CD4-positive, alpha-beta T cell (primary cell): ENCODE measurements at regions of chr4 and their contacts with region 1.

Region 1: DNA sequence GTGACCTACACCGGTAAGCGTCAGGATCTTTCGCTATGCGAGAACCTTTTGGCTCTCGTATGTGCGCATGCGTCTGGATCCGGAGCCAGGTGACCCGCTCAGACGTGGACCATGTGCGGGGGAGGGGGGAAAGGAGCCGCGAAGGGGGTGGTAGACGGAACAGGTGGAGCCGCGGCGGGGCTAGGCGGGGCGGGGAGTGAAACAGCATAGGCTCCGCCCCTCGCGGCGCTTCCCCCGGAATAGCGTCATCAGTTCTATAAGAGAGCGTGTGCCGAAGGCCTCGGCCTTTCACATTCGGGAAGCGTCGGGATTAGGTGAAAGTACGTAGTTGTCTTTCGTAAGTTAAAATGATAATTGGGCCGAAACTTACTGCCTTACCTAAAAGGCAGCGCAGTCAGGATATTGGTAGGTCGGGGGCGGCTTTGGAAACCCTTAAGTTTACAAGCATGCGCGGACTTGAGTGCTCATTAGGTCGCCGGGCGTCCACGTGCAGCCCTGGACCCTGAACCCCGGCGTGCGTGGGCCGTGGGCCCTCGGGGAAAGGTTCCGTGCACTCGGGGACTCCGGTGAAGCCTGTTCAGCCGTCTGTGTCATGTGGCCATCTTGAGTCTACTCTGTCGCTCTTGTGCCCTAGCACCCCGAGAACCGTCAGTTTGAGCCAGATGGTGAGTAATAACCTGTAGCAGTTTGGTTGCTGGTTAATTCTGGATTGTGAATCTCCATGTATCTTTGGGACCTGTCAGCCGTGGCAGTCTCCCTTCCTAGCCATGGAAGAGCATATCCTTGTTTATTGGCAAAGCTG is 74.1 kb downstream of the PRSS12 start:
- DNase-seq: peak; percentile 95 to 99 (median 97)
- ATAC-seq: peak; percentile 95
- H3K4me3 ChIP-seq: peak overlapping the region; percentile 89
- H3K4me3 Mint-ChIP-seq: peak overlapping the region; percentile 92
- H3K27ac ChIP-seq: peak overlapping the region; percentile 92 to 97
- H3K27ac Mint-ChIP-seq: peak overlapping the region; percentile 95
- H3K4me1 ChIP-seq: peaks cover 21% of the 10 kb centered on the region
- H3K4me1 Mint-ChIP-seq: peaks cover 61% of the 10 kb centered on the region
- H3K27me3 ChIP-seq: no peaks in the 10 kb centered on the region
- H3K27me3 Mint-ChIP-seq: no peaks in the 10 kb centered on the region
- CTCF ChIP-seq: no peak

Region 2: GRCh38 chr4:118352843-118353533 is 74.3 kb after region 1 on chr4 and contains the start of gene PRSS12:
- CTCF ChIA-PET with region 1: no interaction called
- POLR2A ChIA-PET with region 1: interaction called, 5 read pairs
- intact Hi-C with region 1: loop called (anchors 2 kb)
- DNase-seq: peak in 13 of 14 experiments; percentile 13 to 73 (median 35)
- ATAC-seq: peak; percentile 81
- H3K4me3 ChIP-seq: peak within 1 kb of the TSS; percentile 23
- H3K4me3 Mint-ChIP-seq: peak within 1 kb of the TSS; percentile 83
- H3K27ac ChIP-seq: no peak within 1 kb of the TSS
- H3K27ac Mint-ChIP-seq: no peak within 1 kb of the TSS
- H3K4me1 ChIP-seq: peaks cover 18% of the 10 kb centered on the region
- H3K4me1 Mint-ChIP-seq: peaks cover 16% of the 10 kb centered on the region
- H3K27me3 ChIP-seq: peaks cover 34 to 85% of the 10 kb centered on the region in 2 experiments
- H3K27me3 Mint-ChIP-seq: peaks cover 86% of the 10 kb centered on the region
- CTCF ChIP-seq: peak; percentile 60
- total RNA-seq, gene PRSS12: not detected

Region 3: DNA sequence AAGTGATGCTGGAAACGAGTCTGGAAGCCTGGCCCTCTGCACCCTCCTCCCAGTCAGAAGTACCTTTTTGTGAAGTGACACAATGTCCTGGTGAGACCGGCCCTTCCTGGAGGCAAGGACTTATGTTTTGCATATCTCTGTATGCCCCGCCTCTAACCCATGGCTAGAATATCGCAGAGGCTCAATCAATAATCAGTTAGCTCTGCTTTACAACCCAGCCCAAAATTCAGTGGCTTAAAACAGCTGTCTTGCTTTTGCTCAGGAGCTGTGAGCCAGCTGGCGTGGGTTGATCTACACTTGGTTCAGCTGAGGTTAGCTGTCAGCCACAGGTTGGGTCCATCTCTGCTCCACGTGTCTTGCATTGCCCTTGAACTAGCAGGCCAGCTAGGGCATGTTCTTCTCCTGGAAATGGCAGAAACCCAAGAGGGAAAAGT is 307.7 kb after region 1 on chr4:
- CTCF ChIA-PET with region 1: no interaction called
- POLR2A ChIA-PET with region 1: no interaction called
- intact Hi-C with region 1: loop called (anchors 1 to 5 kb)
- DNase-seq: no peak
- ATAC-seq: no peak
- H3K4me3 ChIP-seq: no peak overlapping the region
- H3K4me3 Mint-ChIP-seq: no peak overlapping the region
- H3K27ac ChIP-seq: no peak overlapping the region
- H3K27ac Mint-ChIP-seq: no peak overlapping the region
- H3K4me1 ChIP-seq: no peaks in the 10 kb centered on the region
- H3K4me1 Mint-ChIP-seq: peaks cover 10% of the 10 kb centered on the region
- H3K27me3 ChIP-seq: peaks cover 4 to 29% of the 10 kb centered on the region in 2 experiments
- H3K27me3 Mint-ChIP-seq: peaks cover 54% of the 10 kb centered on the region
- CTCF ChIP-seq: no peak

Region 4: GRCh38 chr4:118684873-118685811 is 406.5 kb after region 1 on chr4 and contains the start of gene METTL14:
- CTCF ChIA-PET with region 1: no interaction called
- POLR2A ChIA-PET with region 1: interaction called, 4 read pairs
- intact Hi-C with region 1: loop called (anchors 1 to 5 kb)
- DNase-seq: peak; percentile 71 to 91 (median 78)
- ATAC-seq: peak; percentile 90
- H3K4me3 ChIP-seq: peak within 1 kb of the TSS; percentile 73
- H3K4me3 Mint-ChIP-seq: peak within 1 kb of the TSS; percentile 93
- H3K27ac ChIP-seq: peak within 1 kb of the TSS; percentile 60 to 85
- H3K27ac Mint-ChIP-seq: peak within 1 kb of the TSS; percentile 89
- H3K4me1 ChIP-seq: no peaks in the 10 kb centered on the region
- H3K4me1 Mint-ChIP-seq: peaks cover 33% of the 10 kb centered on the region
- H3K27me3 ChIP-seq: no peaks in the 10 kb centered on the region
- H3K27me3 Mint-ChIP-seq: no peaks in the 10 kb centered on the region
- CTCF ChIP-seq: no peak
- total RNA-seq, gene METTL14: 45.1 to 46.5 TPM

Region 5: GRCh38 chr4:118850488-118851173 is 572.0 kb after region 1 on chr4:
- CTCF ChIA-PET with region 1: no interaction called
- POLR2A ChIA-PET with region 1: no interaction called
- intact Hi-C with region 1: loop called in 1 of 2 experiments (anchors 10 kb)
- DNase-seq: peak in 10 of 14 experiments; percentile 5 to 81 (median 32)
- ATAC-seq: peak; percentile 94
- H3K4me3 ChIP-seq: peak overlapping the region; percentile 60
- H3K4me3 Mint-ChIP-seq: peak overlapping the region; percentile 93
- H3K27ac ChIP-seq: peak overlapping the region; percentile 21 to 56
- H3K27ac Mint-ChIP-seq: peak overlapping the region; percentile 89
- H3K4me1 ChIP-seq: peaks cover 10% of the 10 kb centered on the region
- H3K4me1 Mint-ChIP-seq: peaks cover 39% of the 10 kb centered on the region
- H3K27me3 ChIP-seq: no peaks in the 10 kb centered on the region
- H3K27me3 Mint-ChIP-seq: peaks cover 3% of the 10 kb centered on the region
- CTCF ChIP-seq: no peak

Region 6: DNA sequence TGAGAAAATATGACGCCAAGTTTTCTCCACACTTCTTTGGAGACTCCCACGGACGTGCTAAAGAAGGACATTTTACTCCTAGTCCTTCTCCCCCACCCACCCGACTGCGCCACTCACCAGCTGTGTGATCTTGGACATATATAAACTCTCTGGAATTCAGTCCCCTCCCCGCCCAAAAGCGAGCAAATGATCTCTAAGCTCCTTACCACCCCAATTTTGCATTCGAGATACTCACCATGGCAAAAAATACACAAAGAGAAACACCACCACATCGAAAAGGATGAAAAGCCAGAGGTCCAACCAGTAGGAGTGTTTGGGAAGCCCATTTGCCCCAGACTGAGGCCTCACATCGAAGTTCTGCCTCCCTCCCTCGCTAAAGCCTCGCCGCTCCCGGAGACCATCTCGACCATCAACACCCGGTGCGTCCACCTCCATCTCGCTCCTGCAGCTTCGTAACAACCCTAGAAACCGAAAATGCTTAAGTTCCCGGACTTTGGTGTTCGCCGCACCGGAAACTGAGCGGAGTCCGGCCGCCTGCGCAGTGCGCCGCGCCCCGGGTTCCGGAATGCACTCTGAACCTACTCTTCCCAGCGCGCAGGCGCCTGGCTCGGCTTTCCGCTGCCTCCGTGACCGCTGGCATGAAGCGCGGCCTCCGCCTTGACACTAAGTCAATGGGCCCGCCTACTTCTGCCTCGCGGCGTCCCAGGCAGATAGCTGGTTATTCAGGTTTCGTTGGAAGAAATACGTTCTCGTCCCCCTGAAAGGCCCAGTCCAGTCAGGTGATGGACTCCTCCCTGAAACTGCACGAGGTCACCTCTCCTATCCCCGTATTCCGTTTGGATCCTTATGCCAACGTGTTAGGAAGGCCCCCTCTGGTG is 1021.7 kb after region 1 on chr4:
- CTCF ChIA-PET with region 1: no interaction called
- POLR2A ChIA-PET with region 1: no interaction called
- intact Hi-C with region 1: loop called in 1 of 2 experiments (anchors 10 kb)
- DNase-seq: peak; percentile 80 to 95 (median 88)
- ATAC-seq: peak; percentile 93
- H3K4me3 ChIP-seq: peak overlapping the region; percentile 78
- H3K4me3 Mint-ChIP-seq: peak overlapping the region; percentile 99
- H3K27ac ChIP-seq: peak overlapping the region; percentile 85 to 89
- H3K27ac Mint-ChIP-seq: peak overlapping the region; percentile 99
- H3K4me1 ChIP-seq: peaks cover 20% of the 10 kb centered on the region
- H3K4me1 Mint-ChIP-seq: peaks cover 41% of the 10 kb centered on the region
- H3K27me3 ChIP-seq: no peaks in the 10 kb centered on the region
- H3K27me3 Mint-ChIP-seq: peaks cover 8% of the 10 kb centered on the region
- CTCF ChIP-seq: no peak